ENCODE measurements at regions of chr20 and their contacts with region 1.

Region 1: GRCh38 chr20:51595058-51595532 is 52.6 kb upstream of the NFATC2 start:
- DNase-seq: peak; percentile 89
- H3K4me3 Mint-ChIP-seq: no peak overlapping the region
- H3K27ac Mint-ChIP-seq: no peak overlapping the region
- H3K4me1 Mint-ChIP-seq: peaks cover 40% of the 10 kb centered on the region
- H3K27me3 Mint-ChIP-seq: peaks cover 2% of the 10 kb centered on the region

Region 2: GRCh38 chr20:50967586-50967985 is 627.5 kb before region 1 on chr20:
- CTCF ChIA-PET with region 1: no interaction called
- intact Hi-C with region 1: no loop called
- DNase-seq: no peak
- H3K4me3 Mint-ChIP-seq: no peak overlapping the region
- H3K27ac Mint-ChIP-seq: no peak overlapping the region
- H3K4me1 Mint-ChIP-seq: peaks cover 4% of the 10 kb centered on the region
- H3K27me3 Mint-ChIP-seq: no peaks in the 10 kb centered on the region

Region 3: GRCh38 chr20:51220293-51220706 is 374.8 kb before region 1 on chr20:
- CTCF ChIA-PET with region 1: no interaction called
- intact Hi-C with region 1: loop called (anchors 10 kb)
- DNase-seq: peak; percentile 76
- H3K4me3 Mint-ChIP-seq: no peak overlapping the region
- H3K27ac Mint-ChIP-seq: no peak overlapping the region
- H3K4me1 Mint-ChIP-seq: peaks cover 15% of the 10 kb centered on the region
- H3K27me3 Mint-ChIP-seq: peaks cover 56% of the 10 kb centered on the region

Region 4: DNA sequence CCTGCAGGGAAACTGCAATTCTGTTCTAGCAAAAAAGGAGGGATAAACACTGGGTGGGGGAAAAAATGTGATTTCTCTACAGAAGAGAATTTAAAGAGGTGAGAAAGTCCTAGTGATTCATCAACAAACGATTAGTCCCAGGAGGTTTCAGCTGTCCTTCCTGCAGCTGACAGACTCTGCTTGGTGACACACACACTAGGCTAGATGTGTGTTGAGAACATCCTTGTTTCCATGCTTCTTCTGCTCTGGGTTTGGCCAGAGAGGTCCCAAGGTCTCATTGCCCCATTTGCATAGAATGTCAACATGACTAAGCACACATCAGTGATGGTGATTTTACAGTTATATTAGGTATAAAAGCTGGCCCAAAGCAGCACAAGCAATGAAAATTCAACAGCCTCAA is 310.9 kb before region 1 on chr20:
- CTCF ChIA-PET with region 1: no interaction called
- intact Hi-C with region 1: no loop called
- DNase-seq: no peak
- H3K4me3 Mint-ChIP-seq: no peak overlapping the region
- H3K27ac Mint-ChIP-seq: no peak overlapping the region
- H3K4me1 Mint-ChIP-seq: no peaks in the 10 kb centered on the region
- H3K27me3 Mint-ChIP-seq: no peaks in the 10 kb centered on the region

Region 5: DNA sequence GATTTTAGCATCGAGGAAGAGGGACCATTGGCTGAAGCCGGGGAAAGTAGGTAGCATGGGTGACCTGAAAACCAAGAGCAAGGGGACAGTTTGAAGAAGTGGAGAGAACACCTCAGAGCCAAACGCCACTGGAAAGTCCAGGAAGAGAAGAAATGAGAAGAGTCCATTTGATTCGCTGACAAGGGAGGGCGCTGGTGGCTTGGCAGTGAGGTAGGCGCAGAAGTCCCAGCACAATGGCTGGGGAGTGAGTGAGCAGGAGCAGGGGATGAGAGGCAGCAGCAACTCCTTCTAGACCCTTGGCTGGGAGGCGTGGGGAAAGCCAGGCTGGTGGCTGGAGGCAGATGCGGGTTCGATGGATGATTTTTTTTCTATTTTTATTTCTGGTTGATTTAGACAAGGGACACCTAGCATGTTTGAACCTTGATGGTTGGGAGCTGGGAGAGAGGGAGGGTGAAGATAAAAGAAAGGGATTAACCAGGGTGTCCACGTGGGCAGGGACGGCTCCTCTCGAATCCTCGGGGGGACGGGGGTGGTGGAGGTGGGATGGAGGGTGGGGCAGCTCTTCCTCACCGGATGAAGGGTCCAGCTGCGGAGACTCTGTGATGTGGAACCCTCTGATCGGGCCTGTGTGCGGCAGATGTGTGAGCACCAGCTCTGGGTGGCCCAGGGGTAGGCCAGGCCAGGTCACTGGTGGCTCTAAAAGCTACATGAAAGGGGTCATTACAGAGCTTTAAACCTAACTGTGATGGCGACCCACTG is 216.7 kb before region 1 on chr20:
- CTCF ChIA-PET with region 1: interaction called, 34 read pairs
- intact Hi-C with region 1: no loop called
- DNase-seq: peak; percentile 60
- H3K4me3 Mint-ChIP-seq: no peak overlapping the region
- H3K27ac Mint-ChIP-seq: no peak overlapping the region
- H3K4me1 Mint-ChIP-seq: no peaks in the 10 kb centered on the region
- H3K27me3 Mint-ChIP-seq: no peaks in the 10 kb centered on the region

Region 6: GRCh38 chr20:51492167-51493092 is 102.7 kb before region 1 on chr20:
- CTCF ChIA-PET with region 1: interaction called, 10 read pairs
- intact Hi-C with region 1: no loop called
- DNase-seq: no peak
- H3K4me3 Mint-ChIP-seq: no peak overlapping the region
- H3K27ac Mint-ChIP-seq: peak overlapping the region; percentile 93
- H3K4me1 Mint-ChIP-seq: peaks cover 97% of the 10 kb centered on the region
- H3K27me3 Mint-ChIP-seq: no peaks in the 10 kb centered on the region

Region 7: GRCh38 chr20:51608061-51608460 is 13.0 kb after region 1 on chr20:
- CTCF ChIA-PET with region 1: interaction called, 10 read pairs
- intact Hi-C with region 1: loop called (anchors 1 kb)
- DNase-seq: peak; percentile 41
- H3K4me3 Mint-ChIP-seq: no peak overlapping the region
- H3K27ac Mint-ChIP-seq: no peak overlapping the region
- H3K4me1 Mint-ChIP-seq: peaks cover 6% of the 10 kb centered on the region
- H3K27me3 Mint-ChIP-seq: peaks cover 4% of the 10 kb centered on the region

Measured in activated naive CD4-positive, alpha-beta T cell treated with anti-CD3 and anti-CD28 coated beads for 36 hours (primary cell).